K562 (cell line): ENCODE measurements at regions of chr4 and their contacts with region 1.

Region 1: DNA sequence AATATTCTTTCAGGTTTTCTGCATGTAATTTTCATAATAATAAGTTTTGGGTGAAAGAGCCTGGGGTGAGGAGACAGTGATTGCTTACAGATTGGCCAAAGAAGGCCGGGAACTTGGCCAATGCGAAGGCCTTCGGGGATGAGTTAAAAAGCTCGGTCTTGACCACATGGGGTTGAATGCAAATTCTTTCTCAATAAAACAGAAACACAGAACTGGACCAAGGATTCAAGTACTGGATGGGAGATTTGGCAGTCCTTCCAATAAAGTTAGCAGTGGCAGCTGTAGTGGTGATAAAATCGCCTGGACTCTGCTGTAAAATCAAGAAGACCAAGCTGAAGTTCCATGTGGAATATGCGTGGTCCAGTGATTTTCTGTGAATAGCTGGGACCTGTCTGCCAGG is 282.2 kb upstream of the KLF3 start:
- DNase-seq: no peak
- ATAC-seq: no peak
- H3K4me3 ChIP-seq: no peak overlapping the region
- H3K27ac ChIP-seq: no peak overlapping the region
- H3K4me1 ChIP-seq: peaks cover 9 to 52% of the 10 kb centered on the region in 2 experiments
- H3K27me3 ChIP-seq: no peaks in the 10 kb centered on the region
- CTCF ChIP-seq: no peak
- EP300 ChIP-seq: no peak
- POLR2A ChIP-seq: no peak
- RAD21 ChIP-seq: no peak

Region 2: DNA sequence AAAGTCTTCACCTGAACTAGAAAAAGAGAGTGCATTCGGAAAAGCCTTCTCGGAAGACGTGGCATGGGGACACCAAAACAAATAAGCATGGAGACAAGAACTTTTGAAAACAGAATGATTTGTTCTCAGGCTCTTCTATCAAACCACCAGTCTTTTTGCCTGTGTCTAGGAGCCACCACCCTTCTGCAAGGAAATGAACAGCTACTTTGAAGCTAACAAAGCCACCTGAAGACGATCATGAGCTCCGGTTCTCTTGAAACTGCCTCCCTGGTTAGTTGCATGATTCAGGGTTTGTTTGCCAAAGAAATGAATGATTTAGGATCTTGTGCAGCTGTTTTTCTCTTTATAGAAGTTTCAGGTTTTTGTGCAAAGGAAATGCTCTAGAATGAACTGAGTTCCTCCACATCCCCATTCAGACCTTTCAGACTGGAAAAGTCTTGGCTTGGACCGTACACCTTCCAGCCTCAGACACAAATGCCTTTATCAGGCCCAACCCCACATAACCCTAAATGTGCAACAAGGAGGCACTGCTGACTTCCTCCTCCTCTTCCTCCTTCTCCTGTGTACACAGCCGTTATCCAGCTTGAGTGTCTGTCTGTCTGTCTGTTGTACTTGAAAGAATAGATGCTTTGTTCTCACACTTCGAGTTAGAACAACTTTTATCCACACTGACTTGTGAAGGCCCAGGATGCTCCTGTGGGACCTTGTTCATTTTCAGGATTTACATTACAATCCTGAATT is 52.6 kb before region 1 on chr4:
- CTCF ChIA-PET with region 1: no interaction called
- POLR2A ChIA-PET with region 1: interaction called, 3 read pairs
- in situ Hi-C with region 1: no loop called
- intact Hi-C with region 1: loop called (anchors 1 kb)
- DNase-seq: peak in 1 of 4 experiments; percentile 40
- ATAC-seq: peak; percentile 16; the same call in 2 of the 3 replicates
- H3K4me3 ChIP-seq: no peak overlapping the region
- H3K27ac ChIP-seq: no peak overlapping the region; the same call in 2 of the 3 replicates
- H3K4me1 ChIP-seq: peaks cover 18 to 32% of the 10 kb centered on the region in 2 experiments
- H3K27me3 ChIP-seq: no peaks in the 10 kb centered on the region
- CTCF ChIP-seq: no peak
- EP300 ChIP-seq: no peak
- POLR2A ChIP-seq: no peak
- RAD21 ChIP-seq: no peak

Region 3: GRCh38 chr4:38663801-38664705 is 282.3 kb after region 1 on chr4 and contains the start of gene KLF3:
- CTCF ChIA-PET with region 1: no interaction called
- POLR2A ChIA-PET with region 1: no interaction called
- in situ Hi-C with region 1: no loop called
- intact Hi-C with region 1: loop called (anchors 5 kb)
- DNase-seq: peak; percentile 88 to 92 (median 90)
- ATAC-seq: peak; percentile 68
- H3K4me3 ChIP-seq: peak within 1 kb of the TSS; percentile 92
- H3K27ac ChIP-seq: peak within 1 kb of the TSS; percentile 98
- H3K4me1 ChIP-seq: peaks cover 17 to 33% of the 10 kb centered on the region in 2 experiments
- H3K27me3 ChIP-seq: no peaks in the 10 kb centered on the region
- CTCF ChIP-seq: no peak
- EP300 ChIP-seq: no peak
- POLR2A ChIP-seq: no peak; the same call in none of the 2 replicates
- RAD21 ChIP-seq: no peak
- polyA plus RNA-seq, gene KLF3: 9.9 to 16.8 TPM

Region 4: DNA sequence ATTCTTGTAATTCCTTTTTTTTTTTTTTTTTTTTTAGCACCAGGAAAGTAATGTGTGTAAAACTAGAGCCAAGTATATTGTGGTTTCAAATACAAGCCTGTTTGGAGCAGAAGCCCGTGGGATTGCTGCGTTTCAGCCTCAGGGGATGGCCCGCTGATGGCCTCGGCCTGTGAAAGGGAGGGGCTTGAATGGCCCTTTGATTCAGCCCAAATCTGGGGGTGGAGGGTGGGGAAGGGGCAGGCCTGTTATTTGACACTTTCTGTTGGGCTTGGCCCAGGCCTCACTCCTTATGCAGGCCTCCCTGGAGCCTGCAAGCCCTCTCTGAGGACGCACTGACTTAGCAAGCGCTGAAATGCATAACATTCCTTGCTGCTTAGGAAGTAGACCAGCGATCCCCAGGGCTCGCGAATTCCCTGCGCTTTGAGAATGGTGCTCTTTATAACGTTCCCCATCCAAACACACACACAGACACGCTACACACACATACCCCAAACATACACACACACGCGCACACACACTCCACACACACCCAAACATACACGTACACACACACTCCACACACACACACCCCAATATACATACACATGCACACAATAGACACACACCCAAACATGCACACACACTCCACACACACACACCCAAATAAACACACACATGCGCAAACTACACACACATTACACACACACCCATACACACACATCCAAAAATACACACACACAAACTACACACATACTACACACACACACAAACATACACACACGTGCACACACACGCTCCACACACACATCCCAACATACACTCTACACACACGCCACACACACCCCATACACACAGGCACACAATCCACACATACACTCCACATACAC is 371.4 kb after region 1 on chr4:
- CTCF ChIA-PET with region 1: no interaction called
- POLR2A ChIA-PET with region 1: no interaction called
- in situ Hi-C with region 1: no loop called
- intact Hi-C with region 1: no loop called
- DNase-seq: peak in 2 of 4 experiments; percentile 17 to 64
- ATAC-seq: peak; percentile 85
- H3K4me3 ChIP-seq: no peak overlapping the region
- H3K27ac ChIP-seq: no peak overlapping the region
- H3K4me1 ChIP-seq: peaks cover 6 to 8% of the 10 kb centered on the region in 2 experiments; a peak in 3 of 5 replicates
- H3K27me3 ChIP-seq: peaks cover 0 to 5% of the 10 kb centered on the region in 2 experiments; a peak in 1 of 5 replicates
- CTCF ChIP-seq: no peak
- EP300 ChIP-seq: no peak
- POLR2A ChIP-seq: no peak
- RAD21 ChIP-seq: no peak